ENCODE measurements at regions of chr5 and their contacts with region 1.

Region 1: DNA sequence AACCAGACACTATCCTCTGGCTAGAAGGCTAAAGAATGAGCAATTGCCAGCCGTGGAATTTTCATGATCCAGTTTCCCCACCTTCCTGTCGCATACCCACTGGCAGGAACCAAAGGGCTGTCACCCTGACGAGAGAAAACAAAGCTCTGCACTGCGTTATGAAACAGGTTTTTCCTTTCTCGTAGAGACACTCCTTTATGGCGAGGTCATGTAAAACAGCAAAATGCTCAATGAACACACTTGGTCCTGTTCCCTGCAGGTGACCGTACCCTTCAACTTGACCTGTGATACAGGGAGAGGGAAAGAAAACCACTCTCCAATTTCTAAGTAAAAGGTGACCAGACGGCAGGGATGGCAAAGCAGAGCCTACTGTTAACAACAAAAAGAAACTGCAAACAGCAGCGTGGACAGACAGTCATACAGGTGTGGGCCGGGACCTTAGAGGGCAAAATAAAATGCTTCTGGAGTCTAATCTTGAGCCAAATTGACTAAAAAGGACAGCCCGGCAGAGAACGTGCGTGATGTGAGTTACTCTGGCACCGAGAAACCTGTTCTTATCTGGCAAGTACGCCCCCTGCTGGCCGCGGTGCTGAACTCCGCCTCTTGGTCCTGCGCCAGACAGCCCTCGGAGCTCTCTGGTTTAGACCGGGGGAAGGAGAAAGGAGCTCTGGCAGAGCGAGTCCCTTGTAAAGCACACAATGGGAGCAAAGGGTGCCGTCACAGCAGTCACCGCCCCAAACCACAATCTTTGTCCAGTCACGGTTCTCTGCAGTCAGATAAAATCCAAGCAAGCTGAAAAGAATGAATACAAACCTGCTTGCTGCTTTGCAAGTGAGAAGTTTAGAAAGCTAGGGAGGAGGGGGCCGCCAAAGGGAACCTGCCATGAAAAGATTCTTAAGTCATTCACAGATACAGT is 98.9 kb downstream of the EFNA5 start:
- DNase-seq: peak; percentile 94
- H3K4me3 ChIP-seq: peak overlapping the region; percentile 60
- H3K27ac ChIP-seq: peak overlapping the region; percentile 96
- H3K4me1 ChIP-seq: peaks cover 63% of the 10 kb centered on the region
- CTCF ChIP-seq: peak; percentile 96

Region 2: GRCh38 chr5:107248066-107248695 is 323.7 kb before region 1 on chr5:
- CTCF ChIA-PET with region 1: interaction called, 3 read pairs
- POLR2A ChIA-PET with region 1: interaction called, 4 read pairs
- intact Hi-C with region 1: loop called (anchors 5 kb)
- DNase-seq: peak; percentile 62
- H3K4me3 ChIP-seq: no peak overlapping the region
- H3K27ac ChIP-seq: no peak overlapping the region
- H3K4me1 ChIP-seq: peaks cover 8% of the 10 kb centered on the region
- CTCF ChIP-seq: peak; percentile 99

Region 3: GRCh38 chr5:107389130-107389774 is 182.6 kb before region 1 on chr5:
- CTCF ChIA-PET with region 1: interaction called, 7 read pairs
- POLR2A ChIA-PET with region 1: interaction called, 31 read pairs
- intact Hi-C with region 1: loop called (anchors 1 kb)
- DNase-seq: peak; percentile 96
- H3K4me3 ChIP-seq: peak overlapping the region; percentile 53
- H3K27ac ChIP-seq: peak overlapping the region; percentile 97
- H3K4me1 ChIP-seq: peaks cover 80% of the 10 kb centered on the region
- CTCF ChIP-seq: peak; percentile 54; the same call in 1 of the 2 replicates

Region 4: DNA sequence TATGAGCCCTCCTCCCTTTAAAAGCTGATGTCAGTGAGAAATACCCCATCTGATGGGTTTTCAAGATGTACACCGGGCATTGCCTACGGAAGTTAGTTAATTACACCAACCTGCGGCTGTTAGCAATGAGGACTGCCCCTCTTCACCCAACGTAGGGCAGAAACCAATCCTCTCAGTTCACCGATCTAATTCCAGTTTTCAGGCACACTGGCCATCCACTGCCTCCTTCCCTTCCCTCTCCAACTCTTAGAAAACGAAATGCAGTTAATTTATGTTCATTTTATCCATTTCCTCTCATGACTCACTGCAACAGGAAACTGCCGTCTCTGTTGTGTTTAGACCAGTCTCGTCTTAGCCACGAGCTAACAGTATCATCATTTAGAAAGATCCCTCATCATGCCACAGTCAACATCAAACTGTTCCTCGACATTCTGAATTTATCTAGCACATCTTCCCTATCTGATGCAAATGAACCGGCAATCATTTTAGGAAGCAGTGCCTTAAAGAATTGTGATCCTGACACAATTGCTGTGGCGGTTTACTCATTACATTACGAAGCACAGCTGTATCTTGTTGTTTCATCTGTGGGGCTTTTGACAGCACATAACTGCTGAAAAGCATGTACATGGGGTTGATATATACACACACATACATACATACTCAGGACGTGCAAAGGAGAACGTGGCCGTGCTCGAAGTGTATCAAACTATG is 69.8 kb before region 1 on chr5:
- CTCF ChIA-PET with region 1: interaction called, 4 read pairs
- POLR2A ChIA-PET with region 1: interaction called, 14 read pairs
- intact Hi-C with region 1: no loop called
- DNase-seq: no peak
- H3K4me3 ChIP-seq: no peak overlapping the region
- H3K27ac ChIP-seq: no peak overlapping the region
- H3K4me1 ChIP-seq: peaks cover 21% of the 10 kb centered on the region
- CTCF ChIP-seq: no peak

Region 5: GRCh38 chr5:107557051-107557658 is 14.7 kb before region 1 on chr5:
- CTCF ChIA-PET with region 1: interaction called, 5 read pairs
- POLR2A ChIA-PET with region 1: interaction called, 218 read pairs
- intact Hi-C with region 1: no loop called
- DNase-seq: no peak
- H3K4me3 ChIP-seq: no peak overlapping the region
- H3K27ac ChIP-seq: no peak overlapping the region
- H3K4me1 ChIP-seq: peaks cover 46% of the 10 kb centered on the region
- CTCF ChIP-seq: no peak